RWPE1 (cell line): ENCODE measurements at regions of chr10 and their contacts with region 1.

Region 1: GRCh38 chr10:20065814-20066213 is 249.6 kb downstream of the PLXDC2 start:
- DNase-seq: no peak
- H3K27ac ChIP-seq: no peak overlapping the region
- CTCF ChIP-seq: no peak

Region 2: GRCh38 chr10:19847321-19847720 is 218.5 kb before region 1 on chr10:
- CTCF ChIA-PET with region 1: no interaction called
- POLR2A ChIA-PET with region 1: no interaction called
- DNase-seq: no peak
- H3K27ac ChIP-seq: no peak overlapping the region
- CTCF ChIP-seq: no peak

Region 3: GRCh38 chr10:20048161-20048560 is 17.7 kb before region 1 on chr10:
- CTCF ChIA-PET with region 1: interaction called, 13 read pairs
- POLR2A ChIA-PET with region 1: no interaction called
- DNase-seq: no peak
- H3K27ac ChIP-seq: no peak overlapping the region
- CTCF ChIP-seq: no peak

Region 4: GRCh38 chr10:20276127-20276979 is 210.5 kb after region 1 on chr10:
- CTCF ChIA-PET with region 1: no interaction called
- POLR2A ChIA-PET with region 1: no interaction called
- DNase-seq: peak; percentile 2
- H3K27ac ChIP-seq: no peak overlapping the region
- CTCF ChIP-seq: no peak